ENCODE measurements at regions of chr11 and their contacts with region 1.

Region 1: DNA sequence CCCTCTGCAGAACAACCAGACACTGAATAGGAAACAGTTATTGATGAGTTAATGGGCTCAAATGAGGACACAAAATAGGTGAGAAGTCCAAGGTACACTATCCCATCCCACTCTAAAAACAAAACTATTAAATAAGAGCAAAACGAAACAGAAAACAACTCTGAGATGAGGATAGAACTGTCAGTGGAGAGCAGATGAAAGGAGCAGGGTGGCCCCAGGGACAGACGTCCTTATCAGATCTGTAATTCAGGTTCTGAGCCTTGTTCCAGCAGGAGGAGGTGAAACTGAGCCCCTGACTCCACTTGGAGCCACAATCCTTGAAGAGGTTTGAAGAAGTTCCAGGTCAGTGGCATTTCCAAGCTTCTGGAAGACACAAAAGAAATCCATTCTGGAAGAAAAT is 8.5 kb upstream of the SNX19 start:
- DNase-seq: no peak
- ATAC-seq: peak; percentile 39
- H3K4me3 ChIP-seq: no peak overlapping the region
- H3K27ac ChIP-seq: no peak overlapping the region
- H3K4me1 ChIP-seq: no peaks in the 10 kb centered on the region
- H3K27me3 ChIP-seq: no peaks in the 10 kb centered on the region
- CTCF ChIP-seq: no peak
- EP300 ChIP-seq: no peak
- POLR2A ChIP-seq: no peak
- RAD21 ChIP-seq: no peak

Region 2: DNA sequence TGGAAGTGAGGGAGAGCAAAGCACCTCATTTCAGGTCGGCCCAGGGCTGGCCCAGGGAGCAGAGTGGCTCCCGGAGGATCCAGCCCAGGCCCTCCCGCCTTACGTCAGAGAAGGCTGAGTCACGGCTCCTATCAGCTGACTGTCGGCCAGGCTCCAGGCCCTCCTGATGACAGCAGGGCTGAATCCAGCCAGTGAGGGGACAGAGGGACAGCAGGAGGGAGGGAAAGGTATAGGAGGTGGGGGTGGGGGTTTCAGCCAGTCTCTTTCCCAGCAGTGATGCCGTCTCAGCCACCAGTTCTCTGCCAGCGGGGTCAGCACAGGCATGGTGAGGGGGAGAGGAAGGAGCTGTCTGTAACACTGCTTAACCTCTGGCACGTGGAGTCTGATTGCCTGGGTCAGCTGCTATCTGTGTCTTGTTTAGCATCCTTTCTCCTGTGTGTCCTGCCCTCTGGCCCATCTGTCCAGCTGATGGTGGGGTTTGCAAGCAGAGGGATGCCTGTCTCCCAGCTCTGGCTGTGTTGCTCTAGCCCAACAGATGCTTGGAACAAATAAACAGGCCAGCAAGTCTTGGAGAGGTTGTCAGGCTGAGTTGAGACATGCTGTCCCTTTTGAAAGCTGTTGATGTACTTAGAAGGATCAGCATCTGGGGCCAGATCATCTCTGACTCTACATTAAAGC is 402.3 kb before region 1 on chr11:
- CTCF ChIA-PET with region 1: no interaction called
- POLR2A ChIA-PET with region 1: no interaction called
- RAD21 ChIA-PET with region 1: no interaction called
- SMC1A ChIA-PET with region 1: no interaction called
- in situ Hi-C with region 1: no loop called
- intact Hi-C with region 1: no loop called
- DNase-seq: no peak
- ATAC-seq: no peak
- H3K4me3 ChIP-seq: no peak overlapping the region
- H3K27ac ChIP-seq: no peak overlapping the region
- H3K4me1 ChIP-seq: no peaks in the 10 kb centered on the region
- H3K27me3 ChIP-seq: peaks cover 2 to 8% of the 10 kb centered on the region in 2 experiments
- CTCF ChIP-seq: no peak
- EP300 ChIP-seq: no peak
- POLR2A ChIP-seq: no peak
- RAD21 ChIP-seq: no peak

Region 3: GRCh38 chr11:130979386-130979972 is 54.7 kb after region 1 on chr11:
- CTCF ChIA-PET with region 1: interaction called, 3 read pairs
- POLR2A ChIA-PET with region 1: no interaction called
- RAD21 ChIA-PET with region 1: no interaction called
- SMC1A ChIA-PET with region 1: no interaction called
- in situ Hi-C with region 1: no loop called
- intact Hi-C with region 1: loop called (anchors 5 kb)
- DNase-seq: no peak
- ATAC-seq: 0 out of 3 replicates have a peak, but pooled peaks have one; percentile 33
- H3K4me3 ChIP-seq: no peak overlapping the region
- H3K27ac ChIP-seq: no peak overlapping the region
- H3K4me1 ChIP-seq: no peaks in the 10 kb centered on the region
- H3K27me3 ChIP-seq: no peaks in the 10 kb centered on the region
- CTCF ChIP-seq: peak; percentile 22 to 32 (median 26); a peak in 4 of 6 replicates
- EP300 ChIP-seq: no peak
- POLR2A ChIP-seq: no peak
- RAD21 ChIP-seq: no peak

Region 4: DNA sequence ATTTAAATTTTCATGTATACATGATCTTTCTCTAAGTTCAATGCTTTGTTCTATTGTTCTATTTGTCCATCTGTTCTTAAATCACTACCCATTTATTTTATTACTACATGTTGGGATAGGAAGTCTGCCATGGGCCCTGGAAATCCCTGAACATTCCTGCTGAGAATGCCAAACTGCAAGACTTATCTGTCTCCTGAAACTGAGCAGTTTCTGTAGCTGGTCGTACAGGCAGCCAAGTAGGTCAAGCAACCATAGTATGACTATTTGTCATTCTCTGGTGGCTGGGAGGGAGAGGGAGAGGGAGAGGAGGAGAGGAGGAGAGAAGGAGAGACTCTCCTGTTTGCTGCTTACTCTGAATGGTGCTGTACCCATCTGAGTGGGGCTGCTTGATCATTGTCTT is 74.3 kb after region 1 on chr11:
- CTCF ChIA-PET with region 1: no interaction called
- POLR2A ChIA-PET with region 1: no interaction called
- RAD21 ChIA-PET with region 1: no interaction called
- SMC1A ChIA-PET with region 1: no interaction called
- in situ Hi-C with region 1: no loop called
- intact Hi-C with region 1: no loop called
- DNase-seq: no peak
- ATAC-seq: no peak
- H3K4me3 ChIP-seq: no peak overlapping the region
- H3K27ac ChIP-seq: no peak overlapping the region
- H3K4me1 ChIP-seq: no peaks in the 10 kb centered on the region
- H3K27me3 ChIP-seq: no peaks in the 10 kb centered on the region
- CTCF ChIP-seq: no peak
- EP300 ChIP-seq: no peak
- POLR2A ChIP-seq: no peak
- RAD21 ChIP-seq: no peak